B cell (primary cell): ENCODE measurements at regions of chr3 and their contacts with region 1.

Region 1: GRCh38 chr3:12810013-12810780 is 13.7 kb downstream of the CAND2 start:
- DNase-seq: peak; percentile 96
- ATAC-seq: peak; percentile 100
- H3K4me3 ChIP-seq: peak overlapping the region in 4 of 5 experiments; percentile 45 to 69 (median 61)
- H3K4me3 Mint-ChIP-seq: peak overlapping the region; percentile 81
- H3K27ac ChIP-seq: no peak overlapping the region
- H3K27ac Mint-ChIP-seq: peak overlapping the region; percentile 32
- H3K4me1 ChIP-seq: peaks cover 7 to 14% of the 10 kb centered on the region in 2 donors
- H3K4me1 Mint-ChIP-seq: peaks cover 8% of the 10 kb centered on the region
- H3K27me3 ChIP-seq: no peaks in the 10 kb centered on the region
- H3K27me3 Mint-ChIP-seq: no peaks in the 10 kb centered on the region
- CTCF ChIP-seq: peak; percentile 92

Region 2: GRCh38 chr3:12336099-12336498 is 474.1 kb before region 1 on chr3:
- CTCF ChIA-PET with region 1: no interaction called
- POLR2A ChIA-PET with region 1: no interaction called
- intact Hi-C with region 1: no loop called
- DNase-seq: no peak
- ATAC-seq: no peak
- H3K4me3 ChIP-seq: no peak overlapping the region
- H3K4me3 Mint-ChIP-seq: no peak overlapping the region
- H3K27ac ChIP-seq: no peak overlapping the region
- H3K27ac Mint-ChIP-seq: no peak overlapping the region
- H3K4me1 ChIP-seq: no peaks in the 10 kb centered on the region
- H3K4me1 Mint-ChIP-seq: no peaks in the 10 kb centered on the region
- H3K27me3 ChIP-seq: no peaks in the 10 kb centered on the region
- H3K27me3 Mint-ChIP-seq: peaks cover 8% of the 10 kb centered on the region
- CTCF ChIP-seq: no peak

Region 3: GRCh38 chr3:12629560-12629959 is 180.6 kb before region 1 on chr3:
- CTCF ChIA-PET with region 1: no interaction called
- POLR2A ChIA-PET with region 1: no interaction called
- intact Hi-C with region 1: no loop called
- DNase-seq: no peak
- ATAC-seq: no peak
- H3K4me3 ChIP-seq: no peak overlapping the region
- H3K4me3 Mint-ChIP-seq: no peak overlapping the region
- H3K27ac ChIP-seq: no peak overlapping the region
- H3K27ac Mint-ChIP-seq: no peak overlapping the region
- H3K4me1 ChIP-seq: peaks cover 15 to 24% of the 10 kb centered on the region in 2 donors
- H3K4me1 Mint-ChIP-seq: peaks cover 51% of the 10 kb centered on the region
- H3K27me3 ChIP-seq: no peaks in the 10 kb centered on the region
- H3K27me3 Mint-ChIP-seq: no peaks in the 10 kb centered on the region
- CTCF ChIP-seq: no peak

Region 4: DNA sequence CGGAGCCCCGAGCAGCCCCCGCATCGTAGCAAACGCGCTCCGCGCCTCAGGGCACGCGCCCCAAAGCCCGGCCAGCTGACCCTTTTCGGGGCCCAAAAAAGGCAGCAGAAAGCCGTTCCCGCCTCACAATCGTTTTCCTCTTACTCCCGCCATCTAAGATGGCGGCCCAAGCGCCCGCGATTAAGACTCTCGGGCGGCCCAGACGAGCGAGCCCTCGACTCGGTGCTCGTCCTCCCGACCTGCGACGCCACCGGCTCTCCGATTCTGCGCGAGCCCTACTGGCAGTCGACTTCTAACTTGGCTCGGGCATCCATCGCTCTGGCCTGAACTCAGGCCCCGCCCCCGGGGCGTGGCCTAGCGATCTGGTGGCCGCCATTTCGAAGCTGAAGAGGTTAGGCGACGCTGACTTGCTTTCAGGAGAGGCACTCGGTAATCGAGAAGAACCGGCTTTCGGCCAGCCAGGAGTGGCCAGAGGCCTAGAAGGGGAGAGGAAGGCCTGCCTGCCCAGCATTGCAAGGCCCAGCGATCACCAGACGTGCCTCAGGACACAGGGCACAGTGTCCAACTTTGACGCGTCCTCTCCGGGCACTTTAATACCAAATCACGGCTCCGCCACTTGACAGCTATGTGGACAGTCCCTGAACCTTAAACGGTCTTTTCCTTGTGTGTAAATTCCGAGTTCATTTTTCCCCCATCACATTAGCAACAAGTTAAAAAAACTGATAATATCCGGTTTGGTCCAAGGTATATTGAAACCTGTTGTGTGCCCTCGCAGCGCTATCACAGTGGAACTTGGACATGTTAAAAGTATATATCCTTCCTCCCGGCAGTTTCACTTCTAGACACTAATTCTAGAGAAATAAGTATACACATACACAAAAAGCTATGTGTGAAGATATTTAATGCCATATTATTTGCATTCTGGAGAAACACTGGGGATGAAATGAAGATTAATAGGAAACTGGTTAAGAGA is 146.0 kb before region 1 on chr3 and contains the start of gene RAF1:
- CTCF ChIA-PET with region 1: no interaction called
- POLR2A ChIA-PET with region 1: interaction called, 6 read pairs
- intact Hi-C with region 1: loop called (anchors 1 kb)
- DNase-seq: peak; percentile 98
- ATAC-seq: peak; percentile 92
- H3K4me3 ChIP-seq: peak within 1 kb of the TSS; percentile 76 to 99 (median 85)
- H3K4me3 Mint-ChIP-seq: peak within 1 kb of the TSS; percentile 99
- H3K27ac ChIP-seq: peak within 1 kb of the TSS; percentile 95 to 98
- H3K27ac Mint-ChIP-seq: peak within 1 kb of the TSS; percentile 99
- H3K4me1 ChIP-seq: peaks cover 30 to 33% of the 10 kb centered on the region in 2 donors
- H3K4me1 Mint-ChIP-seq: peaks cover 40% of the 10 kb centered on the region
- H3K27me3 ChIP-seq: no peaks in the 10 kb centered on the region
- H3K27me3 Mint-ChIP-seq: no peaks in the 10 kb centered on the region
- CTCF ChIP-seq: no peak
- total RNA-seq, gene RAF1: 126 and 135 TPM in 2 replicates

Region 5: DNA sequence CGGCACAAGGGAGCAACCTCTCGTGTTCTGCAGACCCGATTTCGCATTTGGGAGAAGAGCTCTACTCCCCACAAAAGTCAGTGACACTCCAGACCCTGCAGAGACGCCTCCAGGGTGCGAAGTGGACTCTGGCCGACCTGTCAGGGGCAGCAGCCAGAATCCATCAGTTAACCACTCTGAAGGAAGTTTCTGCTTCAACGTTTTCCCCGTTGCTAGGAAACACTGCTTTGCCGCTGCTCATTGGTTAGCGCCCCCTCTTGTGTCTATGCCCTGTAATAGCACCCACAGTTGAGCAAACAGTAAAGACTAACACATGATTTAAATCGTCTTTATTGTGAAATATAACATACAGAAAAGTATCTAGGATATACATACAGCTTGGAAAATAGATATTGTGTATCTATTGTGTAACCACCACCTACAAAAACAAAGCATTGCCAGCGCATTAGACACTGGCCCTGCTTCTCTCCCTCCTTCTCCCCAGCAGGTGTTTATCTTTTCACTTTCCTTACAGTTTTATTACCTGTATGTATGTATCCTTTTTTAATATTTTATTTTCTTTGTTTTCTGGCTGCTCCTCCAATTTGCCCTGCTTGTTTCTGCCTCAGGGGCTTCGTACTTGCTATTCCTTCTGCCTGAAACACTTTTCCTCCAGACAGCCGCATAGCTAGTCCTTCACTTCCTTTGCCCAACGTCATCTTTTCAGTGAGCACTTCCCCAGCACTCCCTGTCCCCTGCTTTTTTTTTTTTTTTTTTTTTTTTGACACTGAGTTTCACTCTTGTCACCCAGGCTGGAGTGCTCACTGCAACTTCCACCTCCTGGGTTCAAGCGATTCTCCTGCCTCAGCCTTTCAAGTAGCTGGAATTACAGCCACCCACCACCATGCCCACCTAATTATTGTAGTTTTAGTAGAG is 90.0 kb before region 1 on chr3:
- CTCF ChIA-PET with region 1: interaction called, 10 read pairs
- POLR2A ChIA-PET with region 1: no interaction called
- intact Hi-C with region 1: loop called (anchors 1 kb)
- DNase-seq: peak; percentile 85
- ATAC-seq: peak; percentile 99
- H3K4me3 ChIP-seq: peak overlapping the region in 2 of 5 experiments; percentile 17 to 20
- H3K4me3 Mint-ChIP-seq: peak overlapping the region; percentile 78
- H3K27ac ChIP-seq: no peak overlapping the region
- H3K27ac Mint-ChIP-seq: peak overlapping the region; percentile 82
- H3K4me1 ChIP-seq: peaks cover 3 to 11% of the 10 kb centered on the region in 2 donors
- H3K4me1 Mint-ChIP-seq: peaks cover 7% of the 10 kb centered on the region
- H3K27me3 ChIP-seq: peaks cover 0 to 6% (median 2%) of the 10 kb centered on the region in 4 experiments
- H3K27me3 Mint-ChIP-seq: peaks cover 6% of the 10 kb centered on the region
- CTCF ChIP-seq: peak; percentile 90

Region 6: DNA sequence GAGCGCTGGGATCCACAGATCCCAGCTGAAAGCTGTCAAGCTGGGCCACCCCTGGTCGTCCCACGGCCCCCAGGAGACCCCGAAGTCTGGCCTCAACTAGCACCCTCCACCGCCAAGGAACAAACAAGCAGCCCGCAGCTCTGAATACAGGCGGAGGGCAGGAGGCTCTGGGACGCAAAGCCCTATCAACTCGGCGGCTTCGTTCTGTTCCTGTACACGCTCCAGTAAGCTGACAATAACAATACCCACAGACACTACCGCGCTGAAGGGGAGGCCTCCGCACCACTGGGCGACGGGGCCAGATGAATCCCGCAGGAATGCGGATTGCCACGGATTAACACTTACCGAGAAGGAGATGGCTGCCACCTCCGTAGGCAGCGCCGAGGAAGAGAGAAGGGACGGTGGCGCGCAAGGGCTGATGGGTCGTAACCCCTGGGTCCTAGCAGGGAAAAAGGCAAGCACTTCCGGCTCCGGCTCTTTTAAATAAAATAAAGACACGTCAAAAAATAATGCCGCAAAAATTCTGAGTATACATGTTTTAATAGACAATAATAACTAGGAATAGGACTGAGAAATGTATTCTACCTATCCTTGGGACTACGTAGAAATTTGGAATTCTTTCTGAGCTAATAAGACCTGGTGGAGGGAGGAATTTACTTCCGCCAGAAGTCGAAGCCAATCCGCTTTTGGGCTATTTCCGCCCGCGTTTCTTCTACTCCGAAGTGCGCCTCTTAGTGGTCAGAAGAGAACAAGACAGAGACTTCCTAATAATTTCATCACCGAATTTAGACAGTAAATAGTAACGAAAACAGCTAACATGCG is 31.2 kb after region 1 on chr3 and contains the start of gene RPL32:
- CTCF ChIA-PET with region 1: interaction called, 26 read pairs
- POLR2A ChIA-PET with region 1: no interaction called
- intact Hi-C with region 1: loop called (anchors 1 kb)
- DNase-seq: peak; percentile 96
- ATAC-seq: peak; percentile 92
- H3K4me3 ChIP-seq: peak within 1 kb of the TSS; percentile 83 to 99 (median 90)
- H3K4me3 Mint-ChIP-seq: peak within 1 kb of the TSS; percentile 99
- H3K27ac ChIP-seq: peak within 1 kb of the TSS; percentile 96 to 97
- H3K27ac Mint-ChIP-seq: peak within 1 kb of the TSS; percentile 99
- H3K4me1 ChIP-seq: peaks cover 14 to 30% of the 10 kb centered on the region in 2 donors
- H3K4me1 Mint-ChIP-seq: peaks cover 45% of the 10 kb centered on the region
- H3K27me3 ChIP-seq: no peaks in the 10 kb centered on the region
- H3K27me3 Mint-ChIP-seq: no peaks in the 10 kb centered on the region
- CTCF ChIP-seq: peak; percentile 86
- total RNA-seq, gene RPL32: 2,575 and 2,756 TPM in 2 replicates

Region 7: DNA sequence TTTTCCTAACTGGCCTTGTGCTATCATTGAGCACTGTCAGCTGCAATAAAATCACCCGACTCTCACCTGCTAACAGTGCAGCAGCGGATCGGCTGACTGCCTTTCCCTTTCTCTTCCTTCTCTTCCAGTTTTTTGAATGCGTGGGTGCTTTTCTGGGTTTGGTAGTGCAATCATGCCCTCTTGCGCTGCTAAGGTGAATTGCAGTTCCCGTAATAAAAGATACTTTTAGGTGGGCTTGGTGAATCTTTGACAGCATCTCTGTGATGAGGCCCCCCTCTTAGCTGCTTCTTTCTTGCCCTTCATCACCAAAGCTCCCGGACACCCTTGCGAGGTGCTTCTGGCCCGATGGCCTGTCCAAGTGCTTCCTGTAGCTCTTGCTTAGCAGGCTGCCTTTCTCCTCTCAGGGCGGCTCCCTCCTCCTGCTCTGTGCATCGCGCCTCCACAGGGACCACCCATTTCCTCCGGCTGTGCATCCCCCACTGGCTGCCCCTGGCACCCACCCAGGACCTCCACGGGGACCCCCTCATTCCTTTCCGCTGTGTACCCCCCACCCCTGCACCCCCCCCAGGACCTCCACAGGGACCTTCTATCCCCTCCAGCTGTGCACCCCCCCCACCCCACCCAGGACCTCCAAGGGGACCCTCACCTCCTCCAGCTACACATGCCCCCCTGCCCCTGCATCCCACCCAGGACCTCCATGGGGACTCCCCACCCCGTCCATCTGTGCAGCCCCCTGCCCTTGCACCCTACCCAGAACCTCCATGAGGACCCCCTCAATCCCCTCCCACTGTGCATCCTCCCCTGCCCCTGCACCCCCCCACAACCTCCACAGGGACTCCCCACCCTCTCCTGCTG is 82.0 kb after region 1 on chr3:
- CTCF ChIA-PET with region 1: interaction called, 3 read pairs
- POLR2A ChIA-PET with region 1: no interaction called
- intact Hi-C with region 1: loop called (anchors 5 kb)
- DNase-seq: peak; percentile 75
- ATAC-seq: peak; percentile 37
- H3K4me3 ChIP-seq: peak overlapping the region in 1 of 5 experiments; percentile 35
- H3K4me3 Mint-ChIP-seq: peak overlapping the region; percentile 2
- H3K27ac ChIP-seq: no peak overlapping the region
- H3K27ac Mint-ChIP-seq: no peak overlapping the region
- H3K4me1 ChIP-seq: peaks cover 4 to 8% of the 10 kb centered on the region in 2 donors
- H3K4me1 Mint-ChIP-seq: peaks cover 14% of the 10 kb centered on the region
- H3K27me3 ChIP-seq: peaks cover 0 to 14% (median 3%) of the 10 kb centered on the region in 4 experiments
- H3K27me3 Mint-ChIP-seq: peaks cover 9% of the 10 kb centered on the region
- CTCF ChIP-seq: peak; percentile 94